ENCODE measurements at regions of chr11 and their contacts with region 1.

Region 1: DNA sequence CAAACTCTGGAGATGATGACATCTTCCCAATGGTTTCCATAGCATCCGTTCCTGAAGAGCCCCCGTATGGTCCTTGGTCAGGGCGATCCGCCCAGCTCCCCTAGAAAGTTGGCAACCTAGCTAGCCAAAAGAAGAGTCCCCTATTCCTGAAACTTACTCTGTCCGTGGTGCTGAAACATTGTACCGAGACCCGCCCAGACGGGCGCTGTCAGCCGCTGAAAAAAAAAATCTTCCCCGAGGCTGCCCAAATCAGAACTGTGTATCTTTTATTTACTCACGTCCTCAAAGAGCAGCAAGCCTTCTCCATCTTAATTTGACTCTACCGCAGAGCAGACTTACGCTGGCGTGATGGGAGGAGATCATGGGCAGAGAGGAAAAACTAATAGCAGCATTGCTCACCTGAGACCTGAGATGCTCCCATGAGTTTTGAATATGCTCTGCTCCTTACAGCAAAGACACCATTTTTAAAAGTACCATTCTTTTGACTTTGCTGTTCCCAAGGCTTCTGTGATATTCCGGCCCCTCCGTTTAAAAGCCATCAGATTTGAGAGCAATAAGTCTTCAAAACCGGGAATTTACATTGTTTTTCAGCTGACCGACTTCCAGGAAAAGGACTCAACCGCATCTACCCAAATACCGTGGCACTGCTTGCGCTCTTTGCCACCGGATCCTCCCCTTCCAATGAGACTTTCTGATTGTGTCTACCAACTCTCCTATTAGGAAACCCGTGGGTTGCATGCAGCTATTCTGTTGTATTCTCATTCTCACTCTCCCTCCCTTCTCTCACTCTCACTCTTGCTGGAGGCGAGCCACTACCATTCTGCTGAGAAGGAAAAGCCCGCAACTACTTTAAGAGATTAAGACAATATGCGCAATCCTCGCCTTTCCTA is at the start of gene SLC17A6:
- DNase-seq: peak; percentile 35
- CTCF ChIP-seq: no peak

Region 2: GRCh38 chr11:22263613-22264012 is 74.2 kb before region 1 on chr11:
- in situ Hi-C with region 1: no loop called
- DNase-seq: no peak
- CTCF ChIP-seq: no peak

Region 3: DNA sequence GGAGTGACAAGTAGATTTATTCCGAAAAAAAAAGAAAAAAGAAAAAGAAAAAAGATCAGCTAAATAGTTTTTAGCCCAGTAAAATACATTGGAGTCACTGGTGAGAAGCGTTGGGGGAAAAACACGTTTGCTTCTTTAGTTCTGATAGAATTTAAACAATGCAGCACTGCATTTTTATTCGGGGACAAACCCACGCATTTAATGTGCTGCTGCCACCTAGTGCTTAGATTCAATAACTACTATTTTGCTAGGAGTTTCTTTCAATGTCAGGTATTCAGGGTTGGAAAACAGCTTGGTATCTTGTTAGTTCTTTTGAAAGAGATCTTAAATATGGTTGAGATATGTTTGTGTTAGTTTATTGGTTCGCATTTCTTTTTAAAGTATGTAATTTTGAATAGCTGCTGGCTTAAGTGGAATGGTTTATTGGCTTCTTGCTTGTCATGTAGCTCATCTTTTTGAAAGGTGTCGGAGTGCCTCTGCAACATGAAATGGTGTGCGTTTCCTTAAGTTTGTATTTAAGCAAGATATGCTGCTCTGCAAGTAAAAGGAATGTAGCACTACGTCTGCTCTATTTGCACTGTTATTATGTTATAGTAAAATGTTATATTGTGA is 449.8 kb after region 1 on chr11:
- in situ Hi-C with region 1: loop called (anchors 25 kb)
- DNase-seq: peak; percentile 36
- CTCF ChIP-seq: peak; percentile 65

Measured in GM13977 (cell line).